Right ventricle myocardium superior (tissue), 1 donor: ENCODE measurements at regions of chrX and their contacts with region 1.

Region 1: GRCh38 chrX:120499301-120500072 is 30.4 kb upstream of the LAMP2 start:
- DNase-seq: no peak
- ATAC-seq: peak; percentile 52

Region 2: DNA sequence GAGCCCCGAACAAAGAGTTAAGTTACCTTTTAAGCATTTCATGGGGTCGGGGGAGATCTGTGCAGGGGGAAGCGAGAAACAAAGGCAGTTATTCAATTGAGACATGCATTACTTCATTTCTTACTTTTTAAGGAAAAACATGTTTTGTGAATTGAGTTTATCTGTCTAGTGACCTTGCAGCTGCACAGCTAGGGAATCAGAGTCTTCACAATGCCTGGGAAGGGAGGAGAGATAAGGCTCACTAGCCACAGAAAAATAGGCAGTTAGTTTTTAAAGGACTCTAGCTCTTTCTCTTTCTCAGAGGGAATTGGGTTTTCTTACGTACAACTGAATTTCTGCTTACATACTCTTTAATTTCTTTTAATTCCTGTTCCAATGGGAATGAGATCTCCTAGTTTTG is 275.1 kb before region 1 on chrX:
- intact Hi-C with region 1: no loop called
- DNase-seq: no peak
- ATAC-seq: no peak

Region 3: GRCh38 chrX:120468825-120469525 is 30.5 kb before region 1 on chrX and contains the start of gene LAMP2:
- intact Hi-C with region 1: no loop called
- DNase-seq: peak; percentile 92
- ATAC-seq: peak; percentile 98
- total RNA-seq, gene LAMP2: 49.2 TPM

Region 4: DNA sequence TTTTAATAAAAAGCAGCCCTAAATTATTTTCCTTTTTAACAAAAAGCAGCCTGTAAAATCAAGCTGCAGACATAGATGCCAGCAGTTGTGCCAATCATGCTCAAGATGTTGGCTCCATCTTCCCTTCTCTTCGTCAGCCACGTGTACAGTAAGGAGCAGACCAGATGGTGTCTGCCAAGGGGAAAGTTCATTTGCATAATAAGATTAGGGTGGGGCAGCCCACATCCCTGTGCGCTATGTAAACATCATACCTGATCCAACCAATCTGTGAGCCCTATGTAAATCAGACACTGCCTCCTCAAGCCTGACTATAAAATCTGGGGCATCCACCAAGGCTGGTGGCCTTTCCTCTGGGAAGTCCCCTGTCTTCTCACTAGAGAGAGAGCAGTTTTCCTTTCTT is 153.5 kb after region 1 on chrX:
- intact Hi-C with region 1: loop called (anchors 10 kb)
- DNase-seq: no peak
- ATAC-seq: no peak

Region 5: GRCh38 chrX:120697053-120697452 is 197.6 kb after region 1 on chrX:
- intact Hi-C with region 1: no loop called
- DNase-seq: no peak
- ATAC-seq: no peak

Region 6: GRCh38 chrX:120769576-120770341 is 270.3 kb after region 1 on chrX:
- intact Hi-C with region 1: loop called (anchors 5 kb)
- DNase-seq: no peak
- ATAC-seq: peak; percentile 72